A549 (cell line): ENCODE measurements at regions of chr3 and their contacts with region 1.

Region 1: DNA sequence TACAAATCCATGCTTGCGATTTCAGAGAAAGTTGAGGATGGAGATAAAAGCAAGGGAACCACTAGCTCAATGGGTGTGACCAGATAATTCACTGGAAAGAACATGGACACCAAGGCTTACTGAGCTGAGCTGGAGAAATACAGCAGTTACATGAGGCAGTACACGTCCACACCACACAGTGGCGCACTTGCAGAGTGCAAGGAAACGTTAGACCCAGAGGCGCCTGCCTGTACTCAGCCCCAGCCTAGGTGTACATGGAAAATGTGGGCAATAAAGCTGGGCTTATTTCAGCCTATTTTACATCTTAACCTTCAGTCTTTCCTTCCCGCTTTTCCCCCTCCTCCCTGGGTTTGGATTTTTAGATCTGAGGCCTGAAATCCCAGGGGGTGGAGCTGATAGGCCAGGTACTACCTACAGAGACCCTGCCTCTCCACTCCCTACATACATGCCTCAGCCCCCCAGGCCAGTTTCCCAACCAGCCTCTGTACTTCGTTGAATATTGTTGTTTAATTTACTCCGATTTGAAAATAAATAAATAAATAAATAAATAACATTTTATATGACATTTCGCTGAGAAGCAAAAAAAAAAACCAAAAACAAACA is 60.1 kb downstream of the PCOLCE2 start:
- DNase-seq: peak; percentile 72 to 84
- ATAC-seq: peak; percentile 99 to 100
- H3K4me3 ChIP-seq: no peak overlapping the region
- H3K27ac ChIP-seq: 0 out of 6 replicates have a peak overlapping the region, but pooled peaks of 1 of the 2 experiments have one; percentile 47
- H3K4me1 ChIP-seq: 0 out of 3 replicates have a peak, but pooled peaks cover 3% of the 10 kb centered on the region
- CTCF ChIP-seq: peak; percentile 92
- EP300 ChIP-seq: no peak
- POLR2A ChIP-seq: no peak
- RAD21 ChIP-seq: peak; percentile 93 to 95

Region 2: GRCh38 chr3:142586803-142587406 is 241.9 kb before region 1 on chr3:
- CTCF ChIA-PET with region 1: interaction called, 36 read pairs
- POLR2A ChIA-PET with region 1: no interaction called
- DNase-seq: peak; percentile 84
- ATAC-seq: peak; percentile 95 to 96
- H3K4me3 ChIP-seq: no peak overlapping the region
- H3K27ac ChIP-seq: no peak overlapping the region
- H3K4me1 ChIP-seq: peaks cover 7% of the 10 kb centered on the region; the same call in 2 of the 3 replicates
- CTCF ChIP-seq: peak; percentile 94
- EP300 ChIP-seq: no peak
- POLR2A ChIP-seq: no peak
- RAD21 ChIP-seq: peak; percentile 95 to 97

Region 3: DNA sequence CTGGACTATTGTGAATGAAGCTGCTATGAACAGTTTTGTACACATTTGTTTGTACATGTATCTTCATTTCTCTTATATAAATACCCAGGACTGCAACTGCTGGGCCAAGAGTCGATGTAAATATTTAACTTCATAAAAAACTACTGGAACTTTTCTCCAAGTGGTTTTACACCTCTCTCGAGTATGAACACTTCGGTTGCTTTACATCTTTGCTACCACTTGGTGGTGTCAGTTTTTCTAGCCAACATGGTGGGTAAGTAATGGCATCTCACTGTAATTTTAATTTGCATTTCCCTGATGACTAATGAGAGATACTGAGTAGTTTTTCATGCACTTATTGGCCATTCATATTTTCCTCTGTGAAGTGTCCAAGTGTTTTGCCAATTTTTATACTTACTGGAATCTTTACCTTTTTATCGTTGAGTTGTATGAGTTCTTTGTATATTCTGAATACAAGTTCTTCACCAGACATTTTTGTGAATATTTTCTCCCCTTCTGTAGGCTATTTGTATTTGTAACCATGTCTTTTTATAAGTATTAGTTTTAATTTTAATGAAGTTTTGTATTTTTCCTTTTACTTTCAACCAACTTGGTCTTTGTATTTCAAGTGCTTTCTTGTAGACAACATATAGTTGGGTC is 15.7 kb after region 1 on chr3:
- CTCF ChIA-PET with region 1: interaction called, 57 read pairs
- POLR2A ChIA-PET with region 1: no interaction called
- DNase-seq: peak; percentile 50 to 60
- ATAC-seq: peak; percentile 47 to 82; a peak in 4 of 6 replicates
- H3K4me3 ChIP-seq: no peak overlapping the region
- H3K27ac ChIP-seq: no peak overlapping the region
- H3K4me1 ChIP-seq: 0 out of 3 replicates have a peak, but pooled peaks cover 4% of the 10 kb centered on the region
- CTCF ChIP-seq: peak; percentile 50
- EP300 ChIP-seq: no peak
- POLR2A ChIP-seq: no peak
- RAD21 ChIP-seq: peak; percentile 43 to 48; a peak in 4 of 5 replicates

Region 4: DNA sequence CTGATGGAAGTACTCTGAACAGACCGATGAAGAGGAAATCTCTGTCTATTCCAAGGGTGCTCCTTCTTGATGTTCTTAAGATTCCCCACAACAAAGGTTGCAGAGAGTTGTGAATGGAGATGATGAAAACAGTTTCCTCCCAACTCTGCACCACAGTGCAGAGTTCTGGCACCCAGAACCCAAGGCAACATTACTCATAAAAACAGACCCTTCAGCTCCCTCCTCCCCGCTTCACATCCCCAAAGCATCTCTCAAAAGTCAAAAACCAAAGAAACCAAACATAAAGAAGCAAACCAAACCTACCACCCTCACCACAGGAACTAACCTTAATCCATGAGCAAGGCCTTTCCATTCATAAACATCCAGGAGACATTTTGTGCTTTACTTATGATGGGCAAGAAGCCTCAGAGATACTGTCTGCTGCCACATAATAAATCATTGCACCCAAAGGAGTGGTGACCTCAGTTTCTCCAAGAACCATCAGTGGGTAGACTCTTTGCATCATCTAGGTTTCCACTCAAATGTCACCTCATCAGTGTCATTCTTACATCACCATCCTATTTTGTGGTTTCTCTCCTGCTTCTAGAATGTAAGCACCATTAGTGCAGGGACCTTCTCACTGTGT is 46.9 kb after region 1 on chr3:
- CTCF ChIA-PET with region 1: interaction called, 26 read pairs
- POLR2A ChIA-PET with region 1: no interaction called
- DNase-seq: no peak
- ATAC-seq: no peak
- H3K4me3 ChIP-seq: no peak overlapping the region
- H3K27ac ChIP-seq: no peak overlapping the region
- H3K4me1 ChIP-seq: no peaks in the 10 kb centered on the region
- CTCF ChIP-seq: no peak
- EP300 ChIP-seq: no peak
- POLR2A ChIP-seq: no peak
- RAD21 ChIP-seq: no peak

Region 5: GRCh38 chr3:142904639-142905436 is 76.0 kb after region 1 on chr3:
- CTCF ChIA-PET with region 1: interaction called, 31 read pairs
- POLR2A ChIA-PET with region 1: no interaction called
- DNase-seq: peak in 1 of 2 experiments; percentile 52
- ATAC-seq: peak; percentile 62 to 83; a peak in 4 of 6 replicates
- H3K4me3 ChIP-seq: no peak overlapping the region
- H3K27ac ChIP-seq: peak overlapping the region in 1 of 2 experiments; percentile 3; a peak in 2 of 6 replicates
- H3K4me1 ChIP-seq: peaks cover 12% of the 10 kb centered on the region
- CTCF ChIP-seq: peak; percentile 40; the same call in 2 of the 3 replicates
- EP300 ChIP-seq: no peak
- POLR2A ChIP-seq: no peak
- RAD21 ChIP-seq: peak; percentile 45 to 68; a peak in 3 of 5 replicates

Region 6: DNA sequence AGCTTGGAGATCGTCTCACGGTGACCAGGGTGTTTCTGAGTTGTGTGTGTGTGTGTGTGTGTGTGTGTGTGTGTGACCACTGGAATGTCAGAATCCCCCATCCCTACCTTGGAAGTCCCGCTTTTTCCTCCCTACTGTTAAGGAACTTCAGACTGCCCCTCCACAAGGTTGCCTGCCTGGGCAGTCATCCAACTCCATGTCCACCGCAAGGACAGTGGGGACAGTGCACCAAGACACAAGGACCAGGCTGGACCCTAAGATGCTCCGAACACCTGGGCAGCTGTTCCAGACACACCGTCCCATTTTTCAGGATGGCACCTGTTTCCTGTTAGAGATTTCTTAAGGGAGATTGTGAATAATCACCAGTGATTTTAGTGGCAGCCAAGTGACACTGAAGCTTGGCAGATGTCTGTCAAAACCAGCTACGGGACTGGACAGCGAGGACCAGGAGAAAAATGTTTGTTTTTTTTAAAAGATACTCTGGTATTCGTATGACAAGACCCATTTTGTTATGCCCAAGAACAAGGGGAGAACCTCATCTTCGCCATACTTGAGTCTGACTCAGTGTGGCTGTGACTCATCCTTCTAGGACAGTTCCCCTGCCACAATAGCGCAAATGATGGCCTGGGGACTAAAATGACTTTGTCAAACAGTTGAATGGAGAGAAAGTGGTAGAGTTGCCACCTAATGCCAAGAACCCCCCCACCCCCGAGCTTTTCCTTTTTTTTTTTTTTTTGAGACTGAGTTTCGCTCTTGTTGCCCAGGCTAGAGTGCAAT is 119.2 kb after region 1 on chr3:
- CTCF ChIA-PET with region 1: interaction called, 13 read pairs
- POLR2A ChIA-PET with region 1: no interaction called
- DNase-seq: no peak
- ATAC-seq: no peak
- H3K4me3 ChIP-seq: no peak overlapping the region
- H3K27ac ChIP-seq: no peak overlapping the region
- H3K4me1 ChIP-seq: no peaks in the 10 kb centered on the region
- CTCF ChIP-seq: no peak
- EP300 ChIP-seq: no peak
- POLR2A ChIP-seq: no peak
- RAD21 ChIP-seq: no peak

Region 7: GRCh38 chr3:142993958-142994442 is 165.2 kb after region 1 on chr3:
- CTCF ChIA-PET with region 1: interaction called, 264 read pairs
- POLR2A ChIA-PET with region 1: no interaction called
- DNase-seq: peak; percentile 69 to 78
- ATAC-seq: peak; percentile 54 to 90; a peak in 5 of 6 replicates
- H3K4me3 ChIP-seq: no peak overlapping the region
- H3K27ac ChIP-seq: no peak overlapping the region
- H3K4me1 ChIP-seq: peaks cover 10% of the 10 kb centered on the region; the same call in 2 of the 3 replicates
- CTCF ChIP-seq: peak; percentile 95
- EP300 ChIP-seq: no peak
- POLR2A ChIP-seq: no peak
- RAD21 ChIP-seq: peak; percentile 93 to 94